ENCODE measurements at regions of chr5 and their contacts with region 1.

Region 1: DNA sequence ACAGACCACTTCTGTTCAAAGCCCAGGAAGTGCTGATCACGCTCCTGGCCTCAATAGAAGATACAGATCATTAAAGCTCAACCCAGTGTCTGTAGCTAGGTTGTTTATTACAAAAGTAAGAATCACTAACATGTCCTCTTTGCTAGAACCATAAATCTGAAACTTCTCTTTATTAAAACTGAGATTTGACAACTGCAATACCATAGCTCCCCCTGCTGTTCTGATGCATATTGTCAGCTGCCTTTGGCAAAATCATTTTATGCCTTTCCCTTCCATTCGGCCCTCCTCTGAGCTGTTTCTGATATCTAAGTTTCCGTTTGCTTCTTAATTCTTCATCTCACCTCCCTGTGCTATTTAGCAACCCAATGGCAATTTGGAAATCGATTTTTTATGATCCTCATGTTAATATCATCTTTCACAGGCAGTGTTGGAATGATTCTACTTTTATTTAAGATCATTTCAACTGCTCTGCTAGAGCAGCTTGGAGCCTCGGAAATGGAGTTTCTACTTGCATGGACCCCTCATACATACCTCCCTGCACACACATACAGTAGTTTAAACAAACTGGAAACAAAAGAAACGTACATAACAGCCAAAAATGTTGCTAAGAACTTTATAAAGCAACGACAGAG is 998.8 kb downstream of the MAT2B start:
- DNase-seq: peak; percentile 45 to 57 (median 50)
- ATAC-seq: peak; percentile 62
- H3K4me3 ChIP-seq: no peak overlapping the region
- H3K27ac ChIP-seq: no peak overlapping the region
- H3K4me1 ChIP-seq: peaks cover 7% of the 10 kb centered on the region
- H3K27me3 ChIP-seq: no peaks in the 10 kb centered on the region
- CTCF ChIP-seq: peak in 6 of 7 experiments; percentile 60 to 86 (median 82)
- POLR2A ChIP-seq: no peak

Region 2: GRCh38 chr5:163564321-163564938 is 939.8 kb before region 1 on chr5:
- intact Hi-C with region 1: loop called (anchors 10 kb)
- DNase-seq: peak; percentile 65 to 74 (median 68)
- ATAC-seq: peak; percentile 67
- H3K4me3 ChIP-seq: no peak overlapping the region
- H3K27ac ChIP-seq: no peak overlapping the region
- H3K4me1 ChIP-seq: peaks cover 14% of the 10 kb centered on the region
- H3K27me3 ChIP-seq: no peaks in the 10 kb centered on the region
- CTCF ChIP-seq: peak; percentile 45 to 96 (median 83)
- POLR2A ChIP-seq: no peak

Region 3: GRCh38 chr5:164013077-164013670 is 491.1 kb before region 1 on chr5:
- intact Hi-C with region 1: loop called (anchors 10 kb)
- DNase-seq: peak; percentile 53 to 67 (median 66)
- ATAC-seq: peak; percentile 68
- H3K4me3 ChIP-seq: no peak overlapping the region
- H3K27ac ChIP-seq: no peak overlapping the region
- H3K4me1 ChIP-seq: no peaks in the 10 kb centered on the region
- H3K27me3 ChIP-seq: no peaks in the 10 kb centered on the region
- CTCF ChIP-seq: peak; percentile 54 to 87 (median 76)
- POLR2A ChIP-seq: no peak

Region 4: DNA sequence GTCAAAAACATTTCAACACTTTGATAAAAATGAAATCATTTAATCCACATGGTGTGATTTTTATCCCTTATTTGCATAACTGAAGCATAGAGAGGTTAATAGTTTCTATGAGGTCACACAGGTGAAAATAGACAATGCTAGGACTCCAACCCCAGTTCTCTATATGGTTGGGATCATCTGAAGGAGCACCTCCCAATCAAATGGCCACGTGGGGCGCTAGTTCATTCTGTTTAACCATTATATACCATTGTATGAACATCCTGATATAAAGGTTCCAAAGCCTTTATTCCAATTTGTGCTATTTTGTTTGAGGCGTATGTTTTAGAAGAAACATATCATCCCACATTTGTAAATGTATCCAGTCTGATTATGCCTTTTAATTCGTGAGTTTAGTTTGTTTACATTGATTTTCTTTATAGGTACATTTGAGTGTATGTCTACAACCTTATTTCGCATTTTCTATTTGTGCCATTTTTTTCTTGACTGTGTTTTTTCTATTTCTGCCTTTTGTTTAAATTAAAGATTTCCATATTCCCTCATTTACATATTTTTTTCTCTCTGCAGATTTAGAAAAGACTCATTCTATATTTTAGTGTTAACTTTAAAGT is 93.1 kb after region 1 on chr5:
- intact Hi-C with region 1: no loop called
- DNase-seq: no peak
- ATAC-seq: no peak
- H3K4me3 ChIP-seq: no peak overlapping the region
- H3K27ac ChIP-seq: no peak overlapping the region
- H3K4me1 ChIP-seq: no peaks in the 10 kb centered on the region
- H3K27me3 ChIP-seq: no peaks in the 10 kb centered on the region
- CTCF ChIP-seq: peak in 1 of 7 experiments; percentile 17
- POLR2A ChIP-seq: no peak

Region 5: DNA sequence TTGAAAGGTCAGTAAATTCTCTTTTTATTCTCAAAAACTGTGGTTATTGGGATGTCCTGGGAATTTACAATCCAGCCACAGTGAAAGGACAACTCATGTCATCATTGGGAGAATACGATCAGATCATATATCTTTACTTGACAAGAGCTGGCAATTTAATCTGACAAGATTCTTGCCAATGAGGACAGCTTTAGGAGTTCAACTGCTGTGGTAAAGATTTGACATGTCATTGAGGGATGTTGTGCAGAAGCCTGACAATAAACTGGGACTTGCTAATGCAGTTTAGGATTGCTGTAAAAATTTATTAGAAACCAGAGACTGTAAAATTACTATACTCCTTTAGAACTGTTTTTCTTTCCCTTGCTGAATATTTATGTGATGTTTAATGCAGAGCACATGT is 132.2 kb after region 1 on chr5:
- intact Hi-C with region 1: no loop called
- DNase-seq: no peak
- ATAC-seq: no peak
- H3K4me3 ChIP-seq: no peak overlapping the region
- H3K27ac ChIP-seq: no peak overlapping the region
- H3K4me1 ChIP-seq: no peaks in the 10 kb centered on the region
- H3K27me3 ChIP-seq: no peaks in the 10 kb centered on the region
- CTCF ChIP-seq: no peak
- POLR2A ChIP-seq: no peak

Measured in body of pancreas (tissue), 4 donors.